SK-N-SH (cell line): ENCODE measurements at regions of chr17 and their contacts with region 1.

Region 1: GRCh38 chr17:45247429-45248131 is 14.3 kb downstream of the SPATA32 start:
- DNase-seq: peak; percentile 95
- H3K4me3 ChIP-seq: peak overlapping the region; percentile 65 to 80
- H3K27ac ChIP-seq: peak overlapping the region; percentile 44 to 86; a peak in 3 of 4 replicates
- H3K4me1 ChIP-seq: peaks cover 0 to 20% of the 10 kb centered on the region in 2 experiments; a peak in 1 of 4 replicates
- H3K27me3 ChIP-seq: no peaks in the 10 kb centered on the region
- CTCF ChIP-seq: no peak
- EP300 ChIP-seq: no peak
- RAD21 ChIP-seq: no peak

Region 2: GRCh38 chr17:44924107-44924544 is 323.5 kb before region 1 on chr17:
- CTCF ChIA-PET with region 1: no interaction called
- POLR2A ChIA-PET with region 1: no interaction called
- DNase-seq: no peak
- H3K4me3 ChIP-seq: no peak overlapping the region
- H3K27ac ChIP-seq: peak overlapping the region in 1 of 2 experiments; percentile 60; a peak in 1 of 4 replicates
- H3K4me1 ChIP-seq: peaks cover 0 to 34% of the 10 kb centered on the region in 2 experiments; a peak in 1 of 4 replicates
- H3K27me3 ChIP-seq: no peaks in the 10 kb centered on the region
- CTCF ChIP-seq: no peak
- EP300 ChIP-seq: no peak
- RAD21 ChIP-seq: no peak

Region 3: DNA sequence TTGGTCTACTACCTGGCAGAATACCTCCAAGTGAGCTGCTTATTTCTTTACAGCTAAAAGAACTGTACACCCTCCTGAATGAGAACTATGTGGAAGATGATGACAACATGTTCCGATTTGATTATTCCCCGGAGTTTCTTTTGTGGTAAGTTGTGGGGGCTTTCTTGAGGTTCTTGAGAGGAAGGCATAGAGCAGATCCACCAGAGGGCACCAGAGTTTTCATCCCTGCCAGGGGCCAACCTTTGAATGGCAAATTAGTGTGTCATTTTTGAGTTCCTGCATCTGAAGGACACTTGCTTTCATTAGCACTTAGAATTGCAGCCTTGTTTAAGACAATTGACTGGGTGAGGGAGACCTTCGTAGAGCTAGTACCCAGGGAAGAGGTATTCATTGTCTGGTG is 151.4 kb before region 1 on chr17:
- CTCF ChIA-PET with region 1: no interaction called
- POLR2A ChIA-PET with region 1: no interaction called
- DNase-seq: no peak
- H3K4me3 ChIP-seq: no peak overlapping the region
- H3K27ac ChIP-seq: no peak overlapping the region
- H3K4me1 ChIP-seq: peaks cover 0 to 11% of the 10 kb centered on the region in 2 experiments; a peak in 3 of 4 replicates
- H3K27me3 ChIP-seq: no peaks in the 10 kb centered on the region
- CTCF ChIP-seq: peak; percentile 70
- EP300 ChIP-seq: no peak
- RAD21 ChIP-seq: peak; percentile 50

Region 4: DNA sequence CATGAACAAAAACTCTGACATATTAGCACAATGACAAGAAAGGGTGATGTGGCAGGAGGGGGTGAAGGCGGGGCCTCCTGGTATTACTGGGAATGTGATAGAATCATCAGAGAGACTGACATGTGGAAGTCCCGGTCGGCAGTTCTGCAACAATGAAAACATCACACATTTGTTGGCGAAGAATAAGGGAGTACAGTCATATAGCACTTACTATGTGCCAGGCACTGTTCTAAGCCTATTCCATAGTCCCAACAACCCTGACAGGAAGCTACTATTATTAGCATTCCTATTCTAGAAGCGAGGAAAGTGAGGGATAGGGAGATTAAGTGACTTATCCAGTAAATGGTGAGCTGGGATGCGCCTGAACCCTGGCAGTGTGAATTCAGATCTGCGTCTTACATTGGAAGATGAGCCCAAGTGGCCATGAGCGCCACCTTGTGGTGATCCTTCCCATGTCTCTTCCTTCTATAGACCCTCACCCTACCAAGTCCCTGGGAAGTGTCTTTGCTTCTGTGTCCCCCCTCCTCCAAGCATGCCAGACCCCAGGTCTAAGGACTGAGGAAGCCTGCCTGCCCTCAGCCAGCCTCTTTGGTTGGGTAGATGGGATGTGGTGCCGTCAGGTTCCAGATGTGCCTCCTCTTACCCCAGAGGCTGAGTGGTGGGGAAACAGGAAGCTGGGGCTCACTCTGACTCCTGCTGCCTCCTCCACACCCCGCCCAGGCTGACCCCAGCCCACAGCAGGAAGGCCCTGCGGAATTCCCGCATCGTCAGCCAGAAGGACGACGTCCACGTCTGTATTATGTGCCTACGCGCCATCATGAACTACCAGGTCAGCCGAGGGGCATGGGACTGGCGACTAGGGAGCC is 11.9 kb before region 1 on chr17:
- CTCF ChIA-PET with region 1: interaction called, 54 read pairs
- POLR2A ChIA-PET with region 1: no interaction called
- DNase-seq: peak; percentile 81
- H3K4me3 ChIP-seq: no peak overlapping the region
- H3K27ac ChIP-seq: no peak overlapping the region
- H3K4me1 ChIP-seq: peaks cover 4 to 16% of the 10 kb centered on the region in 2 experiments; a peak in 2 of 4 replicates
- H3K27me3 ChIP-seq: no peaks in the 10 kb centered on the region
- CTCF ChIP-seq: peak; percentile 83
- EP300 ChIP-seq: no peak
- RAD21 ChIP-seq: peak; percentile 65

Region 5: DNA sequence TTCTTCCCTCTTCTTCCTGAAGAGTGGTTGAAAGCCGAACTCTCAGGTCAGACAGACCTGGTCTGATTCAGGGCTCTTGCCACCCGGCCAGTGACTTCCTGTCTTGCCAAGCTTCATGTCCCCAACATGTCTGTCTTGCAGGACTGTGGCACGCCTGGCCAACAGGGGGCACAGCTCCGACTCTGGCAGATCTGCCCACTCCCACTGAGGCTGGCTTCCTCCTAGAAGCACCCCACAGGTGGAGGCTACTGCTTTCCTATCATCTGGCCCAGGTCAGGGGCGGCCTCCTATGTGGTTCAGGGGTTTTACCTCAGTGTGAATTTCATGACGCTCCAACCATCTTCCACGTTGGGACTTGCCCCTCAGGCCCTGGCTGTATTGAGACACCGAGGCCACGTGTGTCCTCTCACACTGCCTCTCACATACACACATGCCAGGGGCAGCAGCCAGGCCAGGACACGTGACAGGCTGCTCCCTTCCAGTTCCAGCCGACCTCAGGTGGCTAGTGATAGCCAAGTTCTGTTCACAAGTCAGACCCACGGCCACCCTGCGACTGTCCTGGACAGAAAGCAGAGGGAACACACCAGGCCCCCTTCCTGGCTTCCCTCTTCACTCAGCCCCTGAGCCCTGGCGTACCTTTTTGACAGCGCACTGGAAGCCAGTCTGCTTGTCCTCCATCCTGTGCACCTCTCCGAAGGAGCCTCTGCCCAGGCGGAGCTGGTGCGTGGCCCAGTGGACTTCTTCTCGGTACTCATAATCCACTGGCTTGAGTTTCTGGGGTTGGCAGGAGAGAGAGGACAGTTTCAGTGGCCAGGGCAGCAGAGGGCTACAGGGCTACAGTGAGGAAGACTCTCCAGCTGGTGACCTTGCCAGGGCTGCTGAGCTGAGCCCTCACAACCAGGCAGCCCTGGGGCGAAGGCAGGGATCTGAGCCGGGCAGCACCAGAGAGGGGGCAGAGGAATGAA is 36.9 kb after region 1 on chr17:
- CTCF ChIA-PET with region 1: interaction called, 13 read pairs
- POLR2A ChIA-PET with region 1: no interaction called
- DNase-seq: no peak
- H3K4me3 ChIP-seq: no peak overlapping the region
- H3K27ac ChIP-seq: no peak overlapping the region; a peak in 1 of 4 replicates
- H3K4me1 ChIP-seq: peaks cover 0 to 36% of the 10 kb centered on the region in 2 experiments; a peak in 2 of 4 replicates
- H3K27me3 ChIP-seq: no peaks in the 10 kb centered on the region
- CTCF ChIP-seq: peak; percentile 42
- EP300 ChIP-seq: no peak
- RAD21 ChIP-seq: peak; percentile 24; the same call in 1 of the 2 replicates

Region 6: DNA sequence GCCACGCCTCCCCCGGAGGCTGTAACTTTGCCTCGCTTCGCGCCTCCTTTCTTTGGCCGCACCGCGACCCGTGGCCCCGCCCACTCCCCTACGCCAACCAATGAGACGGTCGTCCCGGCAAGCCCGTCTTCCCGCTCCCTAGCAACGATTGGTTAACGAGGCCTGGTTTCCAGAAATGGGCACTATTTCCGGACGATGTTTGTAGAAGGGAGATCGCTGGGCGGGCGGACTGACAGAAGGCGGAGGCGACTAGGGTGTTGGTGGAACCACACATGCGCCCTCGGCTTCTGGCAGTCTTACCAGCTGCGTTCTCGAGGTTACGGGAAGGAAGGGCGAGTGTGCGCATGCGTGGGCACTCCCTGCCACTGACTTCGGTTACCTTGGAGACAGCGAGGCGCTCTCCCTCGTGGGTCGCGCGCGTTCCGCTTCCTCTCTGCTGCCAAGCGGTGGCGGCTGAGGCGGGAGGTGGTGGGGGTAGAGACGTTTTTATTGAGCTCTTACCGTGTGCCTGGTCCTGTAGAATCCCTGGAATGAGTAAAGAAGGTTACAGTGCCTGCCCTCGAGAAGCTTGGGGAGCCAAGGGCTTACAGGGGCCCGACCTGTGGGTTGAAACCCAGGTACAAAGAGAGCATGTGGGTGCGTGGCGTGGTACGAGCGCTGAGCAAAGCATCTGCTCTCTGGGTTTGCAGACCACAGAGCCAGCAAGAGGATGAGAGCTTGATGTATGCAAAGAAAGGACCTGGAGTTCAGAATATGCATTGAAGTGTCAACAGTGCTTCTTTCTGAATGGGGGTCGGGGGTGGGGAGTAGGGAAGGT is 69.7 kb after region 1 on chr17:
- CTCF ChIA-PET with region 1: interaction called, 28 read pairs
- POLR2A ChIA-PET with region 1: interaction called, 6 read pairs
- DNase-seq: peak; percentile 99
- H3K4me3 ChIP-seq: peak overlapping the region; percentile 87 to 93
- H3K27ac ChIP-seq: peak overlapping the region; percentile 95 to 99
- H3K4me1 ChIP-seq: peaks cover 47 to 58% of the 10 kb centered on the region in 2 experiments
- H3K27me3 ChIP-seq: no peaks in the 10 kb centered on the region
- CTCF ChIP-seq: no peak
- EP300 ChIP-seq: no peak
- RAD21 ChIP-seq: 0 out of 2 replicates have a peak, but pooled peaks have one; percentile 15

Region 7: DNA sequence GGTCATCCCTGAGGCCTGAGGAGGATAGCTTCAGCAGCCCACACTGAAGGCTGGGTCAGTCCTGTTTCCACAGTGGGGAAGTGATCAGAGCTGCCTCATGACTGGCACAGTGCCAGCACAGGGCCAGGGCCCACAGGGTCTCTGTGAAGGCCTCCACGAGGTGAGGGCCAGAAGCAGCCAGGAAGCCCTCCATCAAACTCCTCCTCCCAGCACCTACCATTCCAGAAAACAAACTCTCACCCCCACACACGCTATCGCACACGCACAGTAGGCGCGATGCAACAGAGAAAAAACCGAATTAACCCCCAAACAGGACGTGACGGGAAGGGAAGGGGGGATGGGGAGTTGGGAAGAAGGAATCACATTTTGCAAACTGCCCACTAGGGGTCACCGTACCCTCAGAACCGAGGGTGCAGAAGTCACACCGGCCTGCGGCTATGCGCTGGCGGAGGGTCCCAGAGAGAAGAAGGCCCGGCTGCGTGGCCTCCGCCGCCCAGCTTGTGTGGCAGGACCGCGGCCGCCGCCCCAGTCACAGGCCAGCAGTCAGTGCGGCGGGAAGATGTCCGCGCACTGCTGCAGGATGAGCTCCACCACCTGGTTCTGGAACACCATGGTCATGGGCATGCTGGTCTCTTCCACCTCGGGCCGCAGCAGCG is 147.5 kb after region 1 on chr17:
- CTCF ChIA-PET with region 1: interaction called, 11 read pairs
- POLR2A ChIA-PET with region 1: no interaction called
- DNase-seq: peak; percentile 95
- H3K4me3 ChIP-seq: no peak overlapping the region; a peak in 1 of 4 replicates
- H3K27ac ChIP-seq: no peak overlapping the region
- H3K4me1 ChIP-seq: peaks cover 0 to 8% of the 10 kb centered on the region in 2 experiments; a peak in 1 of 4 replicates
- H3K27me3 ChIP-seq: no peaks in the 10 kb centered on the region
- CTCF ChIP-seq: peak; percentile 76
- EP300 ChIP-seq: no peak
- RAD21 ChIP-seq: peak; percentile 83